GM12878 (cell line): ENCODE measurements at regions of chr20 and their contacts with region 1.

Region 1: GRCh38 chr20:7935027-7935551 is 5.2 kb downstream of the HAO1 start:
- DNase-seq: peak; percentile 3
- ATAC-seq: peak; percentile 85
- H3K4me3 ChIP-seq: no peak overlapping the region
- H3K27ac ChIP-seq: no peak overlapping the region
- H3K4me1 ChIP-seq: no peaks in the 10 kb centered on the region; the same call in 1 of the 2 replicates
- H3K27me3 ChIP-seq: no peaks in the 10 kb centered on the region
- CTCF ChIP-seq: no peak
- EP300 ChIP-seq: 0 out of 4 replicates have a peak, but pooled peaks have one; percentile 13 to 37
- POLR2A ChIP-seq: no peak
- RAD21 ChIP-seq: no peak

Region 2: DNA sequence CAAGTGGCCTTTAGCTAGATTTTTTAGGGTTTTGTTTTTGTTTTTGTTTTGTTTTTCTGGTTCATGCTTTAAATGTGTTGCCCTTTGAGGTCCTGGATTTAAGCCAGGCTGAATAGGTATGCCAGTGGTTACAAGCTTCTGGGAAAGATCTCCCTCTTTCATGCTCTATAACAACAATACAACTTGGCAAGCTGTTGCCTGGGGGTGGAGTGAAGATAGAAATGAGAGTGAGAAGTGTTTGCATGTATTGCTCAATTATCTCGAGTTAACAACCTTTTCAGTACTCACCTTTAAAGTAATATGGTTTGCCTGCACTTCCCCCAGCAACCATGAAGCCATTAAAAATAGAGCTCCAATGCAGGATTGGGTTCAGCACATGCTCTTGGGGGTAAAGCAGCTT is 24.4 kb after region 1 on chr20:
- CTCF ChIA-PET with region 1: interaction called, 10 read pairs
- POLR2A ChIA-PET with region 1: no interaction called
- RAD21 ChIA-PET with region 1: no interaction called
- SMC1A ChIA-PET with region 1: interaction called, 4 read pairs
- in situ Hi-C with region 1: no loop called
- intact Hi-C with region 1: no loop called
- DNase-seq: no peak
- ATAC-seq: no peak
- H3K4me3 ChIP-seq: no peak overlapping the region
- H3K27ac ChIP-seq: no peak overlapping the region
- H3K4me1 ChIP-seq: no peaks in the 10 kb centered on the region
- H3K27me3 ChIP-seq: no peaks in the 10 kb centered on the region; a peak in 1 of 4 replicates
- CTCF ChIP-seq: no peak
- EP300 ChIP-seq: no peak
- POLR2A ChIP-seq: no peak
- RAD21 ChIP-seq: no peak

Region 3: GRCh38 chr20:7989379-7989778 is 54.3 kb after region 1 on chr20:
- CTCF ChIA-PET with region 1: interaction called, 11 read pairs
- POLR2A ChIA-PET with region 1: interaction called, 3 read pairs
- RAD21 ChIA-PET with region 1: interaction called, 5 read pairs
- SMC1A ChIA-PET with region 1: interaction called, 7 read pairs
- in situ Hi-C with region 1: no loop called
- intact Hi-C with region 1: no loop called
- DNase-seq: no peak
- ATAC-seq: no peak
- H3K4me3 ChIP-seq: no peak overlapping the region
- H3K27ac ChIP-seq: no peak overlapping the region
- H3K4me1 ChIP-seq: no peaks in the 10 kb centered on the region
- H3K27me3 ChIP-seq: no peaks in the 10 kb centered on the region
- CTCF ChIP-seq: no peak
- EP300 ChIP-seq: no peak
- POLR2A ChIP-seq: no peak
- RAD21 ChIP-seq: no peak

Region 4: GRCh38 chr20:8019246-8019997 is 84.3 kb after region 1 on chr20 and contains the start of gene TMX4:
- CTCF ChIA-PET with region 1: interaction called, 10 read pairs
- POLR2A ChIA-PET with region 1: no interaction called
- RAD21 ChIA-PET with region 1: interaction called, 9 read pairs
- SMC1A ChIA-PET with region 1: interaction called, 5 read pairs
- in situ Hi-C with region 1: no loop called
- intact Hi-C with region 1: no loop called
- DNase-seq: peak; percentile 76
- ATAC-seq: peak; percentile 93
- H3K4me3 ChIP-seq: peak within 1 kb of the TSS; percentile 70
- H3K27ac ChIP-seq: peak within 1 kb of the TSS; percentile 74
- H3K4me1 ChIP-seq: peaks cover 12% of the 10 kb centered on the region
- H3K27me3 ChIP-seq: no peaks in the 10 kb centered on the region
- CTCF ChIP-seq: peak in 2 of 3 experiments; percentile 8 to 36; a peak in 2 of 6 replicates
- EP300 ChIP-seq: peak; percentile 24 to 61; a peak in 2 of 4 replicates
- POLR2A ChIP-seq: peak; percentile 94
- RAD21 ChIP-seq: no peak
- polyA plus RNA-seq, gene TMX4: 3.9 to 4.4 TPM

Region 5: DNA sequence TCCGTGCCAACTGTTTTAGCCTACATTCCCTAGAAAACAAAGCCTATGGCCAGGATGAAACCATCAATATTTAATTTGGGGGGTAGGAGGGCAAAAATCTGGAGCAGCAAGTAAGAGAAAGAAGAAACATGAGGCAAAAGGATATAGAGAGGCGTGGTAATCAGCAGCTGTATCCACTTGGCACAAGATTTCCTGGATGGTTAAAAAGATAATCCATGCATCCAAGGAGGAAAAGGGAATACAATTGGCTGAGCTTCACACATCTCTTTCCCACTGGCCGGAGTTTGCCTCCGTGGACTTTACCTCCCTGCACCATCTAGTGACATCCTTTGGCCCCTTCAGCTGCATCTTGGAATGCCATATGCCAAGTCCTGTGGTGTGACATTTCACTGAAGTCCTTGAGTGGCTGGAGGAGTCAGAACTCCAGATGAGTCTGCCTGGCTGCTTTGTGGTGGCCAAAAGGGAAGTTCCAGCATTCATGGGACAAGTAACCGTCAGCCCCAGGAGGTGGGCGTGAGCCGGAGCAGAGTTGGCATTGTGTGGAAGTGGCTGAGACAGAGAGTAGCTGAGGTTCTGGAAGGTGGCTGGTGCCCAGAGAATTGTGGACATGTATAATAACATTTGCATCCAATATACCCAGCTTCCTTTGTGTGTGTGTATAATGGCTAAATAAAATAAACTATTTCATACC is 98.2 kb after region 1 on chr20:
- CTCF ChIA-PET with region 1: interaction called, 13 read pairs
- POLR2A ChIA-PET with region 1: no interaction called
- RAD21 ChIA-PET with region 1: interaction called, 7 read pairs
- SMC1A ChIA-PET with region 1: interaction called, 4 read pairs
- in situ Hi-C with region 1: no loop called
- intact Hi-C with region 1: no loop called
- DNase-seq: no peak
- ATAC-seq: no peak
- H3K4me3 ChIP-seq: no peak overlapping the region
- H3K27ac ChIP-seq: no peak overlapping the region
- H3K4me1 ChIP-seq: no peaks in the 10 kb centered on the region
- H3K27me3 ChIP-seq: no peaks in the 10 kb centered on the region
- CTCF ChIP-seq: no peak
- EP300 ChIP-seq: no peak
- POLR2A ChIP-seq: no peak
- RAD21 ChIP-seq: no peak

Region 6: GRCh38 chr20:8043687-8044282 is 108.7 kb after region 1 on chr20:
- CTCF ChIA-PET with region 1: interaction called, 35 read pairs
- POLR2A ChIA-PET with region 1: no interaction called
- RAD21 ChIA-PET with region 1: interaction called, 17 read pairs
- SMC1A ChIA-PET with region 1: interaction called, 20 read pairs
- in situ Hi-C with region 1: no loop called
- intact Hi-C with region 1: loop called (anchors 5 kb)
- DNase-seq: no peak
- ATAC-seq: peak; percentile 86
- H3K4me3 ChIP-seq: no peak overlapping the region
- H3K27ac ChIP-seq: no peak overlapping the region
- H3K4me1 ChIP-seq: no peaks in the 10 kb centered on the region
- H3K27me3 ChIP-seq: no peaks in the 10 kb centered on the region
- CTCF ChIP-seq: peak; percentile 50 to 72 (median 62); a peak in 5 of 6 replicates
- EP300 ChIP-seq: no peak
- POLR2A ChIP-seq: no peak
- RAD21 ChIP-seq: peak; percentile 68

Region 7: GRCh38 chr20:8305449-8305978 is 370.4 kb after region 1 on chr20:
- CTCF ChIA-PET with region 1: interaction called, 17 read pairs
- POLR2A ChIA-PET with region 1: no interaction called
- RAD21 ChIA-PET with region 1: interaction called, 5 read pairs
- SMC1A ChIA-PET with region 1: interaction called, 8 read pairs
- in situ Hi-C with region 1: no loop called
- intact Hi-C with region 1: no loop called
- DNase-seq: peak; percentile 30
- ATAC-seq: peak; percentile 95
- H3K4me3 ChIP-seq: no peak overlapping the region
- H3K27ac ChIP-seq: no peak overlapping the region
- H3K4me1 ChIP-seq: no peaks in the 10 kb centered on the region
- H3K27me3 ChIP-seq: no peaks in the 10 kb centered on the region
- CTCF ChIP-seq: peak; percentile 65 to 80 (median 79)
- EP300 ChIP-seq: no peak
- POLR2A ChIP-seq: no peak
- RAD21 ChIP-seq: peak; percentile 60